Esophagus muscularis mucosa (tissue), 4 donors: ENCODE measurements at regions of chr9 and their contacts with region 1.

Region 1: GRCh38 chr9:91900055-91900796 is 49.8 kb downstream of the ROR2 start:
- DNase-seq: peak; percentile 91
- H3K4me3 ChIP-seq: peak overlapping the region in 3 of 4 donors; percentile 1 to 12 (median 9)
- H3K27ac ChIP-seq: peak overlapping the region; percentile 34 to 88 (median 64)
- H3K4me1 ChIP-seq: peaks cover 28 to 97% (median 95%) of the 10 kb centered on the region in 4 donors
- H3K27me3 ChIP-seq: no peaks in the 10 kb centered on the region
- CTCF ChIP-seq: no peak
- EP300 ChIP-seq: no peak
- POLR2A ChIP-seq: no peak

Region 2: DNA sequence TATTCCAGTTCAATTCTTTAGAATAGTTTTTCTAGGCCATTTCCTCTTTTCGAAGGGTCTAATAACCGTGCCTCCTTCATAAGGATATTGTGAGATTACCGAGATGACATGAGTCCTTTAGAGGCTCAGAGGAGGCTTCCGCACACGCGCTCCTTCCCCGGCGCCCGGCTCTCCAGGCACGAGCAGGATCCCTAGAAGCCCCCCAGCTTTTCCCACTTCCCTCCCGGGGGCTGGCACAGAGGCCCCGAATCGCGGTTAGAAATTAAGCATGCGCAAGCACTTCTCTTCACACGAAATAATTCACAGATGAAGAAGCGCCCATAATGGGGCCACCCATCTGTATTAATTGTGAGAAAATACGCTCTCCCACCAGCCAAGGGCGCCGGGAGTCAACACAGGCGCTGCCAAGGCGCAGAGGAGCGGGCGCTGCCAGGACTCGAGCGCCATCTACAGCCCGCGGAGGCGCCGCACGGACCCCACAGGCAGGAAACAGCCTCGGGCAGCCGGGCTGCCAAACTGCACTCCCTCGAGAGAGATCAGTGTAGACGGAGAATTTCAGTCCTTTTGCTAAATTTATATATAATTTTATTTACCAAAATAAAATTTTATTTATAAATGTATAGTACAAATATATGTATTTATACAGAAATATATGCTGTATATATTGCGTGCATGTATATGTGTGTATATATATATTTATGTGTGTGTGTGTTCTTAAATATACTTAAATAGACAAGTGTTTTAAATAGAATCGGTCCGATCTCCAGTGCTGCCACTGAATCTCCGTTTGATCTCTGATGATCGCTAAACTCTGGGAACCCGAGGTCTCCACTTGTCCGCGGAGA is 218.5 kb before region 1 on chr9:
- intact Hi-C with region 1: no loop called
- DNase-seq: peak; percentile 92
- H3K4me3 ChIP-seq: peak overlapping the region in 3 of 4 donors; percentile 3 to 18 (median 15)
- H3K27ac ChIP-seq: no peak overlapping the region
- H3K4me1 ChIP-seq: peaks cover 0 to 8% (median 5%) of the 10 kb centered on the region in 4 donors
- H3K27me3 ChIP-seq: no peaks in the 10 kb centered on the region
- CTCF ChIP-seq: peak; percentile 82 to 93 (median 85)
- EP300 ChIP-seq: no peak
- POLR2A ChIP-seq: no peak

Region 3: DNA sequence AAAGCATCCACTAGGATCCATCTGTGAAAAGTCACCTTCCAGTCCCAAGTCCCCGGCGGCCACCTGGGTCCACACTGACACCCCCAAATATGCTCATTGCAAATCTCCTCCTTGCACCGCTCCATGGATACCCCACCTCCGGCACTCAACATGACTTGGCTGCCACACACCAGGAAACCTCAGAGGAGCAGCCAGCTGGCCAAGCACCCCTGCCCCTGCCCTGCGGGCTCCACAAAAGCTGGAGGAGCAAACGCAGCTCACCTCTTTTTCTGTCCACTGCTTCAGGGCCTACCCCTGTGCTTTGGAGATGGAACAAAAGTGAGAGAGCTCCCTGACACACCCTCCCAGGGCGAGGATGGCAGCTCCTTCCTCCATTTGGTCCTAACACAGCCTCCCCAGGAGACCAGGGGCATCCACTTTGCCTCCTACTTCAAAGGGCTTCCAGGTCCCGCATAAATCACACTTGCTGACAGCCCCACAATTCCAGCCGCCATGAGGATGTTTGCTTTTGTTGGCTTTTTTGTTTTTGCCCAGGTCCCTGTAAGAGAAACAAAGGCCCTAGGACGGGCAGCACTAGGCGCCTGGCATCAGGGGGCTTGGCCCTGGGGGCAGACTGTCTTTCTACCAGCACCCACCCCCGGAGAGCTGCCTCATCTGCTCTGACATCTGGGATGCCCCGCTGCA is 35.0 kb after region 1 on chr9:
- intact Hi-C with region 1: loop called (anchors 5 kb)
- DNase-seq: no peak
- H3K4me3 ChIP-seq: no peak overlapping the region
- H3K27ac ChIP-seq: peak overlapping the region; percentile 57 to 77 (median 70)
- H3K4me1 ChIP-seq: peaks cover 0 to 65% (median 55%) of the 10 kb centered on the region in 4 donors
- H3K27me3 ChIP-seq: no peaks in the 10 kb centered on the region
- CTCF ChIP-seq: no peak
- EP300 ChIP-seq: no peak
- POLR2A ChIP-seq: no peak